Esophagus muscularis mucosa (tissue), 4 donors: ENCODE measurements at regions of chr4 and their contacts with region 1.

Region 1: DNA sequence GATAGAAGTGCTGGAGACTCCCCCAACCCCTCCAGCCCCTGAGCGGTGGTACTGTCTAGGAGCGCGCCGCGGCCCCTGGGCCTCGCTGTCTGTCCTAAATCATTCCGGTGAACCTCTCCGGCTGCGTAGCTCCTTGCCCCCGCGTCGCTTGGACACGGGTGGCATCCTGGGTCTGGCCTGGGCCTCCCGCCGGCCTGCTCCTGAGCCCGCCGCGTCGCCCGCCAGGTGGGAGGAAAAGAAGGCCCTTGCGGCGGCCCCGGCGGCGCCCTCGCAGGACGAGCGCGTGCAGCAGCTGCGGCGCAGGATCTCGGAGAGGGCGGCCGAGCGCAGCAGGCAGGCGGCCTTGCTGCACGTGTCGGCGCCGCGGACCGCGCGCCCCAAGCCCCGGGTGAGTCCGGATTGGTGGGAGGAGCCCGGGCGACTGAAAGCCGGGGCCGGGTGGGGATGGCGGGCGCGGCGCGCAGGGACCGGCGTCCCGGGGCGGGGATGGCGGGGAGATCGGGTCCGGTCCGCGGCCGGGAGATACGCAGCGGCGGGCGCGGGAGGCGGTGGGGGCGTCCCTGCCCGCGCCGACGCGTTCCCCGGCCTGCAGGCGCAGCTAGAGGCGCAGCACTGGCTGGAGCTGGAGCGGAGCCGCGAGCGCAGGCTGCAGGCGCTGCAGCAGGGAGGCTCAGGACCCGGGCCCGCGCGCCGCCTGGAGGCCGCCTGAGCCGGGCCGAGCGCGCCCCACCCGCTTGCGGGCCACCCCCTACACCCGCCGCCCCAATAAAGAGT is 6.5 kb upstream of the RNF4 start:
- DNase-seq: no peak
- H3K4me3 ChIP-seq: peak overlapping the region; percentile 61 to 80 (median 65)
- H3K27ac ChIP-seq: peak overlapping the region; percentile 61 to 84 (median 72)
- H3K4me1 ChIP-seq: peaks cover 6 to 32% (median 23%) of the 10 kb centered on the region in 4 donors
- H3K27me3 ChIP-seq: peaks cover 0 to 16% (median 0%) of the 10 kb centered on the region in 4 donors
- CTCF ChIP-seq: peak; percentile 63 to 68 (median 68)
- EP300 ChIP-seq: no peak
- POLR2A ChIP-seq: no peak

Region 2: GRCh38 chr4:2220016-2220630 is 242.3 kb before region 1 on chr4:
- intact Hi-C with region 1: loop called (anchors 2 kb)
- DNase-seq: no peak
- H3K4me3 ChIP-seq: no peak overlapping the region
- H3K27ac ChIP-seq: no peak overlapping the region
- H3K4me1 ChIP-seq: peaks cover 0 to 9% (median 2%) of the 10 kb centered on the region in 4 donors
- H3K27me3 ChIP-seq: no peaks in the 10 kb centered on the region
- CTCF ChIP-seq: peak; percentile 72 to 82 (median 77)
- EP300 ChIP-seq: no peak
- POLR2A ChIP-seq: no peak

Region 3: DNA sequence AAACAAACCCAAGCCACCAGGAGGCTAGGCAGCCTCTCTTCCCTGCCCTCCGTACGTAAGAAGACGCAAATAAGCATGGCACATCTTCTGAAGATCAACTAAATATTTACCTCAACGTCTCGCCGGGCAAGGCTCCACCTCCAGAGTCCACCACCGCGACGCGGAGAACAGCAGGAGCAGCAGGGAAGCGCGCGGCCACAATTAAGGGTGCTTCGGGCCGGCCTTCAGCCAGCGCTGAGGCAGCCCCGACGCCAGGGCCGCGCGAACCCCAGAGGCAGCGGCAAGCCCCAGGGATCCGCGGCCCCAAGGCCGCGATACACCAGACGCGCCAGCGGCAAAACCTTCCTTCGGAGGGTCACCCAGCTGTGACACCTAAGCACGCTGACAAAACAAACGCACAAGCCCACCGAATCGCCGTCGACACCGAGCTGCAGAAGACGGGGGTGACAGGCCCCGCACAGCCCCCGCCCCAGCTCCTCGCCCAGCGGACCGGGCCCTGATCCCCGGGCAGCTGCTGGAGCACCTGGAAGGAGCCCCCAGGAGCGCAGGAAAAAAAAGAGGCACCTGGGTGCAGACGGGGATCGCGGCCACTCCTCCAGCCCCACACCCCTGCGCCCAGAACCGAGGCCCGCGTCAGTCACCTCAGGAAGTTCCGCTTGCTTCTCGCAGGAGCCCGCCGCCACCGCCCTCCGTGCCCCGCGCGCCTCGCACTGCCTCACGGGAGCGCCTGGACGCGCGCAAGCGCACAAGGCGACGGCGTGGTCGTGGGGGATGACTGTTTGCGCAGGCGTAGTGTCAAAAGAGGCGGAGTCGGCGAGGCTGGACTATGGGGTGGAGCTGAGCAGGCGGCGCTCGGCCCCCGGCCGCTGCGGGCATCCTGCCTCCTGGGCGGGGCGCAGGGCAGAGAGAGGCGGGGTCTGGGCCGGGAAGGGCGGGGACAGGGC is 220.7 kb before region 1 on chr4 and contains the starts of genes HAUS3 and POLN:
- intact Hi-C with region 1: loop called (anchors 5 kb)
- DNase-seq: peak; percentile 99
- H3K4me3 ChIP-seq: peak within 1 kb of the TSS; percentile 75 to 94 (median 84)
- H3K27ac ChIP-seq: peak within 1 kb of the TSS; percentile 77 to 89 (median 82)
- H3K4me1 ChIP-seq: peaks cover 51 to 90% (median 82%) of the 10 kb centered on the region in 4 donors
- H3K27me3 ChIP-seq: no peaks in the 10 kb centered on the region
- CTCF ChIP-seq: no peak
- EP300 ChIP-seq: no peak
- POLR2A ChIP-seq: peak; percentile 65
- total RNA-seq, gene HAUS3: 9.9 to 14.1 (median 11.3) TPM
- total RNA-seq, gene POLN: 1.2 to 3.3 (median 2.7) TPM

Region 4: GRCh38 chr4:2393353-2394270 is 68.8 kb before region 1 on chr4:
- intact Hi-C with region 1: no loop called
- DNase-seq: no peak
- H3K4me3 ChIP-seq: peak overlapping the region in 1 of 4 donors; percentile 12
- H3K27ac ChIP-seq: no peak overlapping the region
- H3K4me1 ChIP-seq: peaks cover 0 to 7% (median 4%) of the 10 kb centered on the region in 4 donors
- H3K27me3 ChIP-seq: peaks cover 0 to 20% (median 0%) of the 10 kb centered on the region in 4 donors
- CTCF ChIP-seq: no peak
- EP300 ChIP-seq: no peak
- POLR2A ChIP-seq: no peak